ENCODE measurements at regions of chr1 and their contacts with region 1.

Region 1: DNA sequence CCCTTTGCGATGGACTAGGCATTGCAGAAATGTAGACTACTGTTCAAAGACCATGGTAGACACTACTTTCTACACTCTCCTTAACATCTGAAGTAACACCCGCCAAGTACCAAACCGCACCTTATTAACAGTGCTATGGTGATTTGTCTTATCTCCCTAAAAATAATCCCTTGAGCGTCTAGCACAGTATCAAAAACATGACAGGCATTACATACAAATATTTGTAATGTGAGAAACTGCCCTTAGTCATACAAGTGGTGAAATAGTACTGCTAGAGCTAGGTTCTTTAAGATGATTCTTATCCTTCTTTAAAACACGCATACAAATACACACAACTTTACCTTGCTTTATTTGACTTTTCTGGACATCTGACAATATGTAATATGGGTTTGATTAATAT is 27.2 kb downstream of the PUM1 start:
- DNase-seq: no peak
- ATAC-seq: no peak
- H3K4me3 ChIP-seq: no peak overlapping the region
- H3K27ac ChIP-seq: no peak overlapping the region
- H3K4me1 ChIP-seq: peaks cover 4% of the 10 kb centered on the region; the same call in 1 of the 2 replicates
- H3K27me3 ChIP-seq: no peaks in the 10 kb centered on the region
- CTCF ChIP-seq: no peak

Region 2: DNA sequence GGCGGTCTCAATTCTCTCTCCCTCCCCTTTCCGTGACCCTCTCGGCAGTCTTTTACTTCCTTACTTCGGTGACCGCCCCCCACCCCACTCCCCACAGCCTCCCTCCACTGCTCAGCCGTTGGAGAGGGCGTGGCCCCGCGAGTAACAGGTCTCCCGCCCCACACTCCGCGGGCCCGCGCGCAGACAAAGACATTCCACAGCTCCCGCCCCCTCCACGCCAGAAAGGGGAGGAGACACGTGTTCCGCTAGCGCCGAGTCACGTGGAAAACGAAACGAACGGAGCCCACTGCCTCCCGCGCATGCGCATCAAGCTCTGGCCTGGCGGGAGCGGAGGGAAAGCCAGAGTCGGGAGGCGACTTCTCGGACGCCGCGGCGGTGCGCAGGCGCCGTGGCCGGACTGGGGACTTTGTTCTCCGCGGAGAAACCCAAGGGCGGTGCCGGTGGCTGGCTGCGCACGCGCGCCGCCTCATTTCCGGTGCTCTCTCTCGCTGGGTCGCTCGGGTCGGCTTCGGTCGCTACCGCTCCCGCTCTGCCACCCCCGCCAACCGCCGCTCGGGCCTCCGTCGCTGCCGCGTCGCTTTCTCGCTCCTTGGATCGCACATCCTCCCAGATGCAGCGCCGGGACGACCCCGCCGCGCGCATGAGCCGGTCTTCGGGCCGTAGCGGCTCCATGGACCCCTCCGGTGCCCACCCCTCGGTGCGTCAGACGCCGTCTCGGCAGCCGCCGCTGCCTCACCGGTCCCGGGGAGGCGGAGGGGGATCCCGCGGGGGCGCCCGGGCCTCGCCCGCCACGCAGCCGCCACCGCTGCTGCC is 975.2 kb after region 1 on chr1 and contains the start of gene KHDRBS1:
- CTCF ChIA-PET with region 1: no interaction called
- POLR2A ChIA-PET with region 1: interaction called, 13 read pairs
- in situ Hi-C with region 1: no loop called
- intact Hi-C with region 1: no loop called
- DNase-seq: peak; percentile 93
- ATAC-seq: peak; percentile 91
- H3K4me3 ChIP-seq: peak within 1 kb of the TSS; percentile 78 to 96
- H3K27ac ChIP-seq: peak within 1 kb of the TSS; percentile 99
- H3K4me1 ChIP-seq: peaks cover 11% of the 10 kb centered on the region
- H3K27me3 ChIP-seq: no peaks in the 10 kb centered on the region
- CTCF ChIP-seq: no peak
- total RNA-seq, gene KHDRBS1: 163 TPM